ENCODE measurements at regions of chr1 and their contacts with region 1.

Region 1: GRCh38 chr1:167803358-167804207 is 81.8 kb downstream of the MPZL1 start:
- DNase-seq: peak; percentile 98
- H3K4me3 Mint-ChIP-seq: peak overlapping the region; percentile 50
- H3K27ac Mint-ChIP-seq: peak overlapping the region; percentile 80
- H3K4me1 Mint-ChIP-seq: peaks cover 24% of the 10 kb centered on the region
- H3K27me3 Mint-ChIP-seq: no peaks in the 10 kb centered on the region

Region 2: GRCh38 chr1:167599957-167600581 is 203.5 kb before region 1 on chr1:
- CTCF ChIA-PET with region 1: interaction called, 3 read pairs
- intact Hi-C with region 1: loop called (anchors 1 kb)
- DNase-seq: peak; percentile 71
- H3K4me3 Mint-ChIP-seq: peak overlapping the region; percentile 45
- H3K27ac Mint-ChIP-seq: peak overlapping the region; percentile 67
- H3K4me1 Mint-ChIP-seq: peaks cover 39% of the 10 kb centered on the region
- H3K27me3 Mint-ChIP-seq: no peaks in the 10 kb centered on the region

Region 3: GRCh38 chr1:167715157-167715999 is 88.2 kb before region 1 on chr1:
- CTCF ChIA-PET with region 1: interaction called, 12 read pairs
- intact Hi-C with region 1: loop called (anchors 1 kb)
- DNase-seq: peak; percentile 95
- H3K4me3 Mint-ChIP-seq: peak overlapping the region; percentile 79
- H3K27ac Mint-ChIP-seq: peak overlapping the region; percentile 92
- H3K4me1 Mint-ChIP-seq: peaks cover 28% of the 10 kb centered on the region
- H3K27me3 Mint-ChIP-seq: peaks cover 5% of the 10 kb centered on the region

Region 4: DNA sequence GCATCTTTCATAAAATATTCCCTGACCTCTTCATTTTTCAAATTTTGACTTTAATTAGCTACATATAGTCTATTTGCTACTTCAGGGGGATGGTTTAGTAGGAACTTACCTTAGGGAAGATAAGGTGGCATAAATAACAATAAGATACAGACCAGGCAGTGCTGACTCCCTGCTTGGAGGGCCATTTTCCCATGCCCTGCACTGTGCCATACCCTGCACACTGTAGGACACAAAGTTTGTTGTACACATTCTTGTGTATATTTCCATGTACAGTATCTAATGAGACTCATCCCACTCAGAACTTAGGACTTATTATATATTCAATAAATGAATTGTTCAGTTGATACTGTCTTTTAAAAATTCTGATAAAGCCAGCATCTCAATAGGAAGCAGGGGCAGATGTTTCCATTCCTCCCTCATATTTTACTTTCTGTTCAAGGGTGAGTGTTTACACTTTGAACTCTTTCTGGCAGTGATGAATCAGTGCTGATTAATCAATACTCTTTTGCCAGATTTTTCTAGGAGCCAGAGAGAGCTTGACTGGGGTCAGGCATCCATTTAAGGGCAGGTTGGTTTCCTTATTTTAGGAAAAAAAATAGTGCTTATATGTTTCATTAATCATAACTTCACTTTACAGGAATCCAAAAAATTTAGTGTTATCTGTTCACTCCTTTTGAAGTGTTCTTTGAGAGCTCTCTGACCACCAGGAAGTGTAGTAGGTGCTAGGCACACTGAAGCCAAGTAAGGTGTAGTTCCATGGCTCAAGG is 51.2 kb before region 1 on chr1:
- CTCF ChIA-PET with region 1: no interaction called
- intact Hi-C with region 1: loop called (anchors 1 kb)
- DNase-seq: no peak
- H3K4me3 Mint-ChIP-seq: peak overlapping the region; percentile 2
- H3K27ac Mint-ChIP-seq: peak overlapping the region; percentile 74
- H3K4me1 Mint-ChIP-seq: peaks cover 28% of the 10 kb centered on the region
- H3K27me3 Mint-ChIP-seq: no peaks in the 10 kb centered on the region

Region 5: DNA sequence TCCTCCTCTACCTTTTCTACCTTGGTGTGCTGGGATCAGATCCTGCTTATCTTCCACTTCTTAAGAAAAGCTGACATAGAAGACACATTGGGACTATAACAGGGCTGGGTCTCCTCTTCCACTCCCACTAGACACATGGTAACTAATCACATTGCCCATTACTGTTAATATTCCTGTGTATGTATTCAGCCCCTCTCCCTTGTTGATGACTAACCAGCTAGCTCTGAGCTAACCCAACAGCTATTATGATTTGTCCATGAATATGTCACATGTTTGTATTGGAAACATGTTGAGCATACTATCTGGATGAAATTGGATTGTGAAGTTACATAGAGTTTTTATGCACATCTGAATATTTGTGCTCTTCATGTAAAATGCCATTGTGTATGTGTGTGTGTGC is 28.9 kb before region 1 on chr1:
- CTCF ChIA-PET with region 1: interaction called, 3 read pairs
- intact Hi-C with region 1: loop called (anchors 1 kb)
- DNase-seq: no peak
- H3K4me3 Mint-ChIP-seq: no peak overlapping the region
- H3K27ac Mint-ChIP-seq: no peak overlapping the region
- H3K4me1 Mint-ChIP-seq: peaks cover 32% of the 10 kb centered on the region
- H3K27me3 Mint-ChIP-seq: no peaks in the 10 kb centered on the region

Region 6: GRCh38 chr1:167829868-167830267 is 26.3 kb after region 1 on chr1:
- CTCF ChIA-PET with region 1: no interaction called
- intact Hi-C with region 1: no loop called
- DNase-seq: no peak
- H3K4me3 Mint-ChIP-seq: no peak overlapping the region
- H3K27ac Mint-ChIP-seq: no peak overlapping the region
- H3K4me1 Mint-ChIP-seq: no peaks in the 10 kb centered on the region
- H3K27me3 Mint-ChIP-seq: no peaks in the 10 kb centered on the region

Region 7: DNA sequence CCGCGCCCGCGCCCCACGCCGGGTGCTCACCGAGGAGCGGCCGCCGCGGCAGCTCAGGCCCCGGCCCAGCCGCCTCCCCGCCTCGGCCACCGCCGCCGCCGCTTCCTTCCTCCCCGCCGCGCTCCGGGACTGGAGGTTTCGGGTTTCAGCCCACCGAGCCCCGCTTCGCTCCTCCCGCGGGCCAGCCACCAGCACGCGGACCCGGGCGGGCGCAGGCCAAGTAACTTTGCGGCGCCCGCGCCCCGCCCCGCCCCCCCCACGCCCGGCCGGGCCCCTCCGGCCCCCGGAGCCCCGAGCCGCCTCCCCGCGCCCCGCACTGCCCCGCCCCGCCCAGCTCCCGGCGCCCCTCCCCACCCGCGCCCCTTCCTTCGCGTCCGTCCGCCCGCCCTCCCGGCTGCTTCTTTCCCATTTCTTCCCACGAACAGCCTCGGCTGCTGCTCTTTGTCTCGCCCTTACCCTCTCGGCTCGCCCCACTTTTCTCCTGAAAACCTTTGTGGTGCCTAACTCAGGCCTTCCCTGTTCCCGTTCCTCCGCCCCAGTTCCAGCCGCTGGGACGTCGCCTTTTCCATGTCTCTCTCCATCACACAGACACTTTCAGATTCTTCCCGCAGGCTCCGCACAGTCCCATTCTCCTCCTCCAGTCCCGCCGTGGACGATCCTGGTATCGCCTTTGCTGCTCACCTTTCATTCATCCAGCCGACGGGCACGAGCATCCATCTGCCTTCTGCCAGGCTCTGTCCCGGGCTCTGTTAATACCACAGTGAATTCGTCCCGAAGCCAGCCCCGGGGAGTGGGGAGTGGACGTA is 333.3 kb after region 1 on chr1 and contains the start of gene GPR161:
- CTCF ChIA-PET with region 1: no interaction called
- intact Hi-C with region 1: loop called (anchors 2 kb)
- DNase-seq: peak; percentile 37
- H3K4me3 Mint-ChIP-seq: peak within 1 kb of the TSS; percentile 75
- H3K27ac Mint-ChIP-seq: no peak within 1 kb of the TSS
- H3K4me1 Mint-ChIP-seq: peaks cover 39% of the 10 kb centered on the region
- H3K27me3 Mint-ChIP-seq: peaks cover 26% of the 10 kb centered on the region
- total RNA-seq, gene GPR161: 0.12 to 0.29 TPM

Measured in activated naive CD4-positive, alpha-beta T cell treated with anti-CD3 and anti-CD28 coated beads for 36 hours (primary cell).